ENCODE measurements at regions of chr9 and their contacts with region 1.

Region 1: DNA sequence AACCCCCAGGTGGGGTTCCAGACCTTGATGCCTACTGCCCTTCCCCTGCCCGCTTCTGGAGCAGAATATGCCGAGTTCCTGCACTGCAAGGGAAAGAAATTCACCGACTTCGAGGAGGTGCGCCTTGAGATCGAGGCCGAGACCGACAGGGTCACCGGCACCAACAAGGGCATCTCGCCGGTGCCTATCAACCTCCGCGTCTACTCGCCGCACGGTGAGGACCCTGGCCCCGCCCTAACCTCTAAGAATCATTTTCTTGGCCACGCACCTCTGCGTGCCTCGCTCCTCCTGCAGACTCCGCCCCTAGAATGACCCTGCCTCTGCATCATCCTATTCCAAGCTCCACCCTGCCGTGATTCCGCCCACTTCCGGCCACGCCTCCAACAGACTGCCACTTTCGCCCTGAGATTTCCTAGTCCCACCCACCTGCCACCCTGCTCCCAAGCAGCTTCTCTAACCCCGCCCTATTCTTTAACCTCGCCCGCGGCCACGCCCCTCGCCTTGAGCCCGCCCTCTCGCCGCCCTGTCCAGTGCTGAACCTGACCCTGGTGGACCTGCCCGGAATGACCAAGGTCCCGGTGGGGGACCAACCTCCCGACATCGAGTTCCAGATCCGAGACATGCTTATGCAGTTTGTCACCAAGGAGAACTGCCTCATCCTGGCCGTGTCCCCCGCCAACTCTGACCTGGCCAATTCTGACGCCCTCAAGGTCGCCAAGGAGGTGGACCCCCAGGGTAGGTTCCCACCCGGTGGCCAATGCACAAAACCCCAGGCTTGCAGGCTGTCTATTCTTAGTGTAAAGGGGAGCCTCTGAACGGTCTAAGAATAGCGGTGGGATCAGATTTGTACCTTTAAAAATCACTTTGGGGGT is 15.6 kb downstream of the DNM1 start:
- DNase-seq: peak; percentile 100
- ATAC-seq: peak; percentile 98
- H3K4me3 ChIP-seq: peak overlapping the region; percentile 26
- H3K27ac ChIP-seq: peak overlapping the region; percentile 43
- H3K4me1 ChIP-seq: peaks cover 17 to 62% of the 10 kb centered on the region in 2 experiments
- H3K27me3 ChIP-seq: no peaks in the 10 kb centered on the region
- CTCF ChIP-seq: peak; percentile 23 to 39 (median 28); a peak in 4 of 6 replicates
- EP300 ChIP-seq: peak; percentile 63
- POLR2A ChIP-seq: peak; percentile 78
- RAD21 ChIP-seq: no peak

Region 2: DNA sequence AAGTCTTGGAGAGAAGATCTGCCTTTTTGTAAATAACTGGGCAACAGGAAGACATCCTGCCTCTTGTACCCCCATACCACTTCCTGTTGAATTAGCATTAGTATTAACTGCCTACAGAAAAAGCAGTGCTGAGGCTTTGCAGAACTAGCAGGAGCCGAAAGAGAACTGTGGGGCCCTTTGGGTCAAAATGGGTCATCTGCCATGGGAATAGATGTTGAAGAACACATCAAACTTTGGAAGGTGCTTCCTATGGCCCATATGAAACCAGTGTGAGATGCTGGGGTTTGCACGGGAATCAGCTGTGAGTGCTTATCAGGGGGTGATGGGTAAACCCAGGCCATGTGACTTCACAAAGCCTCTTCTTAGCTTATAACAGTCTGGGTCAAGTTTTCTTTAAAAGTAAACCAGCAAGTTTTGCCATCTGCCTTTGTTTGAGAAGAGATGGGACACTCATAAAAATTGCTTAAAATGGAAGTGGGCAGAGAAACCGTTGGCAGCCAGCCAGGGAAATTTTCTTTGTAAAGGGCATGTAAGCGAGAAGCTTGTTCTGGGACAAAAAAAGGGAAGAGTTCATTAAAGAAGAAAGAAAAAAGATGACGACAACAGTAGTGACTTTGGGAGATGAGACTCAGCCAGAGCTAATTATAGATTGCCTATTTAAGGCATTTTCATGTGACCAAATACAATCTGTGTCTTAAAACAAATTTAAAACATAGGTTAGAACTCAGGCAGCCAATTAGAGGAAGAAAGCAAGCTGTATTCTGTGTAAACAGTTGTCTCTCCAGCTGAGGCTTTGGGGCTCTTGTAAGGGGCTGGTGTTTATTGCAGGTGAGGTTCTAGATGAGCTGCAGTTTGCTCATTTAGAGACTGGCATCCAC is 146.4 kb before region 1 on chr9:
- CTCF ChIA-PET with region 1: no interaction called
- POLR2A ChIA-PET with region 1: no interaction called
- in situ Hi-C with region 1: no loop called
- intact Hi-C with region 1: no loop called
- DNase-seq: peak in 1 of 4 experiments; percentile 56
- ATAC-seq: no peak
- H3K4me3 ChIP-seq: no peak overlapping the region
- H3K27ac ChIP-seq: peak overlapping the region; percentile 59
- H3K4me1 ChIP-seq: peaks cover 30% of the 10 kb centered on the region in 2 experiments
- H3K27me3 ChIP-seq: no peaks in the 10 kb centered on the region
- CTCF ChIP-seq: no peak
- EP300 ChIP-seq: no peak
- POLR2A ChIP-seq: no peak
- RAD21 ChIP-seq: no peak

Region 3: GRCh38 chr9:128203024-128203706 is 15.6 kb before region 1 on chr9 and contains the start of gene DNM1:
- CTCF ChIA-PET with region 1: no interaction called
- POLR2A ChIA-PET with region 1: interaction called, 33 read pairs
- in situ Hi-C with region 1: no loop called
- intact Hi-C with region 1: no loop called
- DNase-seq: peak; percentile 91 to 100 (median 100)
- ATAC-seq: peak; percentile 92
- H3K4me3 ChIP-seq: peak within 1 kb of the TSS; percentile 55
- H3K27ac ChIP-seq: peak within 1 kb of the TSS; percentile 20; the same call in 2 of the 3 replicates
- H3K4me1 ChIP-seq: peaks cover 19 to 36% of the 10 kb centered on the region in 2 experiments
- H3K27me3 ChIP-seq: no peaks in the 10 kb centered on the region
- CTCF ChIP-seq: peak; percentile 96 to 99 (median 97)
- EP300 ChIP-seq: peak; percentile 45
- POLR2A ChIP-seq: no peak
- RAD21 ChIP-seq: peak; percentile 46 to 67
- polyA plus RNA-seq, gene DNM1: 0.39 to 0.58 TPM

Region 4: GRCh38 chr9:128231638-128232527 is 13.1 kb after region 1 on chr9:
- CTCF ChIA-PET with region 1: no interaction called
- POLR2A ChIA-PET with region 1: interaction called, 11 read pairs
- in situ Hi-C with region 1: no loop called
- intact Hi-C with region 1: no loop called
- DNase-seq: peak in 1 of 4 experiments; percentile 58
- ATAC-seq: peak; percentile 27
- H3K4me3 ChIP-seq: no peak overlapping the region
- H3K27ac ChIP-seq: no peak overlapping the region
- H3K4me1 ChIP-seq: peaks cover 0 to 18% of the 10 kb centered on the region in 2 experiments; a peak in 2 of 5 replicates
- H3K27me3 ChIP-seq: peaks cover 33 to 49% of the 10 kb centered on the region in 2 experiments
- CTCF ChIP-seq: no peak
- EP300 ChIP-seq: no peak
- POLR2A ChIP-seq: no peak
- RAD21 ChIP-seq: no peak

Region 5: GRCh38 chr9:128244837-128245231 is 26.1 kb after region 1 on chr9:
- CTCF ChIA-PET with region 1: no interaction called
- POLR2A ChIA-PET with region 1: interaction called, 12 read pairs
- in situ Hi-C with region 1: no loop called
- intact Hi-C with region 1: loop called (anchors 2 kb)
- DNase-seq: peak; percentile 76 to 96 (median 88)
- ATAC-seq: peak; percentile 64
- H3K4me3 ChIP-seq: no peak overlapping the region
- H3K27ac ChIP-seq: peak overlapping the region; percentile 43; the same call in 1 of the 3 replicates
- H3K4me1 ChIP-seq: peaks cover 28 to 53% of the 10 kb centered on the region in 2 experiments
- H3K27me3 ChIP-seq: no peaks in the 10 kb centered on the region
- CTCF ChIP-seq: no peak
- EP300 ChIP-seq: no peak
- POLR2A ChIP-seq: no peak
- RAD21 ChIP-seq: no peak

Region 6: DNA sequence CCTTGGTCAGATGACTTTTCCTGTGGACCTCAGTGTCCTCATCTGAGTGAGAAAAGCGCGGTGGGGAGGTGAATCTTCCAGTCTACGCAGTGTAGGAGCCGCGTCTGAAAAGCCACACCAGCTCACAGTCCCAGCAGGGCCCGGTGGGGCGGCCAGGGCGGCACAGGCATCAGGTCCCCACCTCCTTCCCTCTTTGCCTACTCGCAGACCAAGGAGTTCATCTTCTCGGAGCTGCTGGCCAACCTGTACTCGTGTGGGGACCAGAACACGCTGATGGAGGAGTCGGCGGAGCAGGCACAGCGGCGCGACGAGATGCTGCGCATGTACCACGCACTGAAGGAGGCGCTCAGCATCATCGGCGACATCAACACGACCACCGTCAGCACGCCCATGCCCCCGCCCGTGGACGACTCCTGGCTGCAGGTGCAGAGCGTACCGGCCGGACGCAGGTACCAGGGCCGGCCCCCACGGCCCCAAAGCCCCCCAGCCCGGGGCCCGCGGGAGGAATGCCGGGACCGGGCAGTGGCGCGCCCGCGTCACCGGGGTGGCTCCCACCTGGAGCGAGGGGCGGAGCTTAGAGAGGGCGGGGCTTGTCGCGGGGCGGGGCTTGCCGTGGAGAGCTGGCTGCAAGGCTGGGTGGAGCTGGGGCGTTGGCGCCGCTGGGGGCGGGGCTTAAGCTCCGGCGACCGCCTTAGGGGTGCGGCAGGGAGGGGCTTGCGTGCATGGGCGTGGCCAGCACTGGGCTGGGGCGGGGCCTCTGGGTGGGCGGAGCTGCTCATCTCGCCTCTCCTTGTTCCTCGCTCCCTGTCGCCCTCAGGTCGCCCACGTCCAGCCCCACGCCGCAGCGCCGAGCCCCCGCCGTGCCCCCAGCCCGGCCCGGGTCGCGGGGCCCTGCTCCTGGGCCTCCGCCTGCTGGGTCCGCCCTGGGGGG is 31.4 kb after region 1 on chr9:
- CTCF ChIA-PET with region 1: no interaction called
- POLR2A ChIA-PET with region 1: interaction called, 12 read pairs
- in situ Hi-C with region 1: no loop called
- intact Hi-C with region 1: loop called (anchors 2 kb)
- DNase-seq: peak; percentile 100
- ATAC-seq: peak; percentile 88
- H3K4me3 ChIP-seq: peak overlapping the region; percentile 72
- H3K27ac ChIP-seq: peak overlapping the region; percentile 61
- H3K4me1 ChIP-seq: peaks cover 61 to 73% of the 10 kb centered on the region in 2 experiments
- H3K27me3 ChIP-seq: no peaks in the 10 kb centered on the region
- CTCF ChIP-seq: no peak; a peak in 1 of 6 replicates
- EP300 ChIP-seq: no peak
- POLR2A ChIP-seq: peak; percentile 17; the same call in 1 of the 2 replicates
- RAD21 ChIP-seq: peak in 1 of 2 experiments; percentile 15; a peak in 1 of 4 replicates

Region 7: GRCh38 chr9:129676975-129677841 is 1458.5 kb after region 1 on chr9:
- CTCF ChIA-PET with region 1: no interaction called
- POLR2A ChIA-PET with region 1: no interaction called
- in situ Hi-C with region 1: loop called (anchors 10 kb)
- intact Hi-C with region 1: no loop called
- DNase-seq: peak in 1 of 4 experiments; percentile 41
- ATAC-seq: peak; percentile 6; the same call in 1 of the 3 replicates
- H3K4me3 ChIP-seq: no peak overlapping the region
- H3K27ac ChIP-seq: no peak overlapping the region
- H3K4me1 ChIP-seq: peaks cover 0 to 38% of the 10 kb centered on the region in 2 experiments; a peak in 3 of 5 replicates
- H3K27me3 ChIP-seq: peaks cover 44 to 86% of the 10 kb centered on the region in 2 experiments
- CTCF ChIP-seq: peak in 2 of 3 experiments; percentile 14 to 18; a peak in 1 of 6 replicates
- EP300 ChIP-seq: no peak
- POLR2A ChIP-seq: no peak; the same call in 1 of the 2 replicates
- RAD21 ChIP-seq: no peak

Measured in K562 (cell line).